ENCODE measurements at regions of chr4 and their contacts with region 1.

Region 1: DNA sequence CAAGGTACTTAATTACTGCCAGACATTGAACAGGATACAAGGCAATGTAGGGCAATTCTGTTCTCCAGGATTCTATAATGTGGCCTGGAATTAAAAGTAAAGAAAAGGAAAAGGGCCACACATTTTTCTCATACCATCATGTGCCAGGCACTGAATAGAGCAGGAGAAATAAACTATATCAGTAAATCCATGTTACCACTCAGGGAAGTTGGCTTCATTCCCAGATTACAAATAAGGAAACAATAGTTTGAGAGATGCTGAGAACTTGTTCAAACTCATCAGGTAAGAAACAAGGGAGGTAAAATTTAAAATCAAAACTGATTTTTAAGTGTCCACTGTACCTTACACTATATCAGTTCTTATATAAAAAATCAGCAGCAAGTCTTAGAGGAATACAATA is 645.0 kb upstream of the ATOH1 start:
- DNase-seq: peak; percentile 77
- H3K4me3 Mint-ChIP-seq: no peak overlapping the region
- H3K27ac Mint-ChIP-seq: peak overlapping the region; percentile 90
- H3K4me1 Mint-ChIP-seq: peaks cover 23% of the 10 kb centered on the region
- H3K27me3 Mint-ChIP-seq: no peaks in the 10 kb centered on the region
- CTCF ChIP-seq: no peak

Region 2: DNA sequence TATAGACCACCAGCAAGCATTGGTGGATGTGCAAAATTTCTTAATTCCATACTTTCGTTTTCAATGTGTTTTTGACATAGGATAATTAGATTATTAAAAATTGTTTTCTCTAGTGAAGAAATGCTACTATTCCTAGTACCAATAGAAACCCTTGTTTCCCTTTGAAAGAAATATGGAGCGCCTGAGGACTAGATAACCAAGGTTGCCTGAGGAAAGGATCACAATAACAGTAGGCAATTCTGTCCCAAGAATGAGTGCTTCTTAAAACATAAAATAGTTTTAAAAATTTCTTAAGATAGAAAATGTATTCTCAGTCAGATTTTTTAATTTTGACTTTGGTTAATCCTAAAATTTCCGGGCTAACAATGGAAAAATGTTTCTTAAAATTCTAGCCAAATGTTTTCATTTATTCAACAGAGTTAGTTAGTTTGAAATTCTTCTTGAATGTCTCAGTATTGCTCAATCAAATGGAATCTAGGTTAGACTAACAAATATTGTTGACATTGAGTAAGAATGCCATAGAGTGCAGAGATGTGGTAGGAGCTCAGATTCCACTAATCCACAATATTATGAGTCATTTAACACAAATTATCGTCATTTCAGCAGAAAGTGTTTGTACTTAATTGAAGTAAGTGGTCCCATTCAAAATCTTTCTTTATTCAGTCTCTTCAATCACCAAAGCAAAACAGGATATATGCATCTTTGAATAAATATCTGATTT is 213.8 kb before region 1 on chr4:
- CTCF ChIA-PET with region 1: no interaction called
- POLR2A ChIA-PET with region 1: interaction called, 3 read pairs
- intact Hi-C with region 1: loop called (anchors 10 kb)
- DNase-seq: peak; percentile 88
- H3K4me3 Mint-ChIP-seq: no peak overlapping the region
- H3K27ac Mint-ChIP-seq: peak overlapping the region; percentile 66
- H3K4me1 Mint-ChIP-seq: no peaks in the 10 kb centered on the region
- H3K27me3 Mint-ChIP-seq: no peaks in the 10 kb centered on the region
- CTCF ChIP-seq: no peak

Region 3: DNA sequence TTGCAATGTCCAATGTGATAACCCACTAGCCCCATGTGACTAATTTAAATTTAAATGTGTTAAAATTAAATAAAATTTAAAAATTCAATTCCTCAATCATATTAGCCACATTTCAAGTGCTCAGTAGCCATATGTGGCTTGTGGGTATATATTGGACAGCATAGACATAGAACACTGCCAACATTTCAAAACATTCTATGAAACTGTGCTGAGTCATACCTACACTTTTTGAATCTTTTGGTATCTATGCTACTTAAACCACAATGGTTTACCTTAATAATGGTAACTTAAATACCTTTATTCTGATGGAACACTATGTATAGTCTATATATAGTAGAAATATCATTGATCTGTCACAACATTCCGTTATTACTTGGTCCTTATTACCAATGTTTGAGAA is 421.6 kb after region 1 on chr4:
- CTCF ChIA-PET with region 1: no interaction called
- POLR2A ChIA-PET with region 1: no interaction called
- intact Hi-C with region 1: no loop called
- DNase-seq: peak; percentile 36
- H3K4me3 Mint-ChIP-seq: no peak overlapping the region
- H3K27ac Mint-ChIP-seq: no peak overlapping the region
- H3K4me1 Mint-ChIP-seq: no peaks in the 10 kb centered on the region
- H3K27me3 Mint-ChIP-seq: no peaks in the 10 kb centered on the region
- CTCF ChIP-seq: no peak

Measured in MCF 10A (cell line).